ENCODE measurements at regions of chr1 and their contacts with region 1.

Region 1: GRCh38 chr1:111222308-111223125 is 5.0 kb upstream of the CHI3L2 start:
- DNase-seq: peak; percentile 83
- ATAC-seq: peak; percentile 48
- H3K4me3 ChIP-seq: peak overlapping the region in 3 of 5 experiments; percentile 3 to 26 (median 5)
- H3K4me3 Mint-ChIP-seq: peak overlapping the region; percentile 72
- H3K27ac ChIP-seq: peak overlapping the region; percentile 46 to 92
- H3K27ac Mint-ChIP-seq: peak overlapping the region; percentile 91
- H3K4me1 ChIP-seq: peaks cover 85 to 87% of the 10 kb centered on the region in 2 donors
- H3K4me1 Mint-ChIP-seq: peaks cover 82% of the 10 kb centered on the region
- H3K27me3 ChIP-seq: no peaks in the 10 kb centered on the region
- H3K27me3 Mint-ChIP-seq: no peaks in the 10 kb centered on the region
- CTCF ChIP-seq: peak; percentile 89

Region 2: GRCh38 chr1:110674337-110675059 is 548.0 kb before region 1 on chr1 and contains the start of gene KCNA3:
- CTCF ChIA-PET with region 1: no interaction called
- POLR2A ChIA-PET with region 1: no interaction called
- intact Hi-C with region 1: loop called (anchors 5 kb)
- DNase-seq: peak; percentile 79
- ATAC-seq: peak; percentile 59
- H3K4me3 ChIP-seq: peak within 1 kb of the TSS in 4 of 5 experiments; percentile 50 to 67 (median 62)
- H3K4me3 Mint-ChIP-seq: peak within 1 kb of the TSS; percentile 84
- H3K27ac ChIP-seq: peak within 1 kb of the TSS; percentile 68 to 76
- H3K27ac Mint-ChIP-seq: peak within 1 kb of the TSS; percentile 81
- H3K4me1 ChIP-seq: peaks cover 38 to 43% of the 10 kb centered on the region in 2 donors
- H3K4me1 Mint-ChIP-seq: peaks cover 54% of the 10 kb centered on the region
- H3K27me3 ChIP-seq: no peaks in the 10 kb centered on the region
- H3K27me3 Mint-ChIP-seq: no peaks in the 10 kb centered on the region
- CTCF ChIP-seq: peak; percentile 48
- total RNA-seq, gene KCNA3: 60.0 and 62.5 TPM in 2 replicates

Region 3: GRCh38 chr1:111030590-111030989 is 191.9 kb before region 1 on chr1:
- CTCF ChIA-PET with region 1: interaction called, 15 read pairs
- POLR2A ChIA-PET with region 1: no interaction called
- intact Hi-C with region 1: loop called (anchors 5 kb)
- DNase-seq: peak; percentile 77
- ATAC-seq: peak; percentile 56
- H3K4me3 ChIP-seq: no peak overlapping the region
- H3K4me3 Mint-ChIP-seq: no peak overlapping the region
- H3K27ac ChIP-seq: no peak overlapping the region
- H3K27ac Mint-ChIP-seq: no peak overlapping the region
- H3K4me1 ChIP-seq: peaks cover 0 to 5% of the 10 kb centered on the region in 2 donors
- H3K4me1 Mint-ChIP-seq: peaks cover 15% of the 10 kb centered on the region
- H3K27me3 ChIP-seq: no peaks in the 10 kb centered on the region
- H3K27me3 Mint-ChIP-seq: peaks cover 3% of the 10 kb centered on the region
- CTCF ChIP-seq: peak; percentile 89

Region 4: GRCh38 chr1:111197598-111198284 is 24.8 kb before region 1 on chr1:
- CTCF ChIA-PET with region 1: interaction called, 205 read pairs
- POLR2A ChIA-PET with region 1: interaction called, 138 read pairs
- intact Hi-C with region 1: no loop called
- DNase-seq: peak; percentile 70
- ATAC-seq: peak; percentile 54
- H3K4me3 ChIP-seq: peak overlapping the region in 1 of 5 experiments; percentile 6
- H3K4me3 Mint-ChIP-seq: peak overlapping the region; percentile 66
- H3K27ac ChIP-seq: no peak overlapping the region
- H3K27ac Mint-ChIP-seq: peak overlapping the region; percentile 84
- H3K4me1 ChIP-seq: peaks cover 57 to 99% of the 10 kb centered on the region in 2 donors
- H3K4me1 Mint-ChIP-seq: peaks cover 95% of the 10 kb centered on the region
- H3K27me3 ChIP-seq: no peaks in the 10 kb centered on the region
- H3K27me3 Mint-ChIP-seq: no peaks in the 10 kb centered on the region
- CTCF ChIP-seq: peak; percentile 28

Region 5: GRCh38 chr1:111320106-111320879 is 97.8 kb after region 1 on chr1:
- CTCF ChIA-PET with region 1: interaction called, 3 read pairs
- POLR2A ChIA-PET with region 1: interaction called, 10 read pairs
- intact Hi-C with region 1: no loop called
- DNase-seq: no peak
- ATAC-seq: no peak
- H3K4me3 ChIP-seq: no peak overlapping the region
- H3K4me3 Mint-ChIP-seq: no peak overlapping the region
- H3K27ac ChIP-seq: no peak overlapping the region
- H3K27ac Mint-ChIP-seq: no peak overlapping the region
- H3K4me1 ChIP-seq: peaks cover 0 to 12% of the 10 kb centered on the region in 2 donors
- H3K4me1 Mint-ChIP-seq: peaks cover 3% of the 10 kb centered on the region
- H3K27me3 ChIP-seq: no peaks in the 10 kb centered on the region
- H3K27me3 Mint-ChIP-seq: no peaks in the 10 kb centered on the region
- CTCF ChIP-seq: no peak

Region 6: DNA sequence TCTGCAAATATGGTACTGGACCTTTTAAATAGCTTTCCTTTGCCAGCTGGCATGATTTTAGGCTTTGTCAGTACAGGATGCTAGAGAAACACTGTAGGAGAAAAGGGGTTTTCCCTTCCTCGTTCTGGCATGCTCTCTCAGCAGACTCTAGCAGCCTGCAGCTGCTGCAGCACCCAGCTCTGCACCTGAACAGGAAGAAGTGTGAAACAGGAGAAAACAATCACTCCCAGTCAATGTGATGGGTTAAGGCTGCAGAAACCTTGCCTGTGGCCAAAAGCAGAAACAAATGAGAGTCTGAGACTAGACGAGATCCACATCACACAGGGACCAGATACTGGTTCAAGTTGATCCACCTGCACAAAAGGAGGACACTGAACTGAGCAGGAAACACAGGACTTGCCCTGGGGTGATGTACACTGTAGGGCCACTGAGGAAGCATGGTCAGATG is 183.8 kb after region 1 on chr1:
- CTCF ChIA-PET with region 1: interaction called, 62 read pairs
- POLR2A ChIA-PET with region 1: interaction called, 3 read pairs
- intact Hi-C with region 1: loop called (anchors 2 kb)
- DNase-seq: peak; percentile 83
- ATAC-seq: peak; percentile 96
- H3K4me3 ChIP-seq: no peak overlapping the region
- H3K4me3 Mint-ChIP-seq: peak overlapping the region; percentile 59
- H3K27ac ChIP-seq: peak overlapping the region; percentile 32 to 37
- H3K27ac Mint-ChIP-seq: peak overlapping the region; percentile 79
- H3K4me1 ChIP-seq: peaks cover 30 to 35% of the 10 kb centered on the region in 2 donors
- H3K4me1 Mint-ChIP-seq: peaks cover 37% of the 10 kb centered on the region
- H3K27me3 ChIP-seq: no peaks in the 10 kb centered on the region
- H3K27me3 Mint-ChIP-seq: no peaks in the 10 kb centered on the region
- CTCF ChIP-seq: no peak

Measured in B cell (primary cell).